Activated T-helper 2 cell treated with anti-CD3 and anti-CD28 coated beads, Interferon-gamma antibody, Interleukin-2, Interleukin-4, amounts not matched to agents 10 μg/mL and 5 μg/mL and 100 μg/mL, durations not matched to agents 14 hours and 24 hours and 36 hours (primary cell): ENCODE measurements at regions of chr5 and their contacts with region 1.

Region 1: DNA sequence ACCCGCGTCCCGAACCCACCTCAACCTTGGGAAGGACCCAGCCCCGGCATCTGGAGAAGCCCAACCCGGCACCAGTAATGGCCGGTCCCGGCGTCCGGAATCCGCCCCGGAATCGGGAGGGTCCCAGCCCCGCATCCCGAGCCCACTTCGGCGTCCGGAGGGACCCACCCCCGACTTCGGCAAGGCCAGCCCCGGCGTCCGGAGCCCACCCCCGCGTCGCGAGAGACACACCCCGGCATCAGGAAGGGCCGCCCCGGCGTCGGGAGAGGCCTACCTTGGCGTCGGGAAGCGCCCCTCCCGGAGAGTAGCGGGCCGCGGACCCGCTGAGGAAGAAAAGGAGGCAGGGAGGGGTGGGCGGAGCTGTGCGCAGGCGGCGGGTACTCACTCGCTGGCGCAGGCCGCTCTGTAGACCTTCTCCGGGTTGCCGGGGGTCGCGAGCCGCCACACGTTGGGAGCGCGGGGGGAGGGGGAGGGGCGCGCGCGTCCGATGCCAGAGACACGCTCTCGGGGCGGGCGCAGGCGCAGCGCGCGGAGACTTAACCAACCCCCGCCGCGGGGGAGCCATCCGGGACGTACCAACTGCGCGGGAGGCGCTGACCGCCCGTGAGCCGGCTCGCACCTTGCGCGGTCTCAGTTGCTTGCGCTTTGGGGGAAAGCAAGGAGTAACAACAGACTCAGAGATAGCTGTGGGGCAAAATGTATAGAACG is at the start of gene UIMC1:
- DNase-seq: peak; percentile 91
- H3K4me3 Mint-ChIP-seq: peak within 1 kb of the TSS; percentile 95
- H3K27ac Mint-ChIP-seq: peak within 1 kb of the TSS; percentile 93
- H3K4me1 Mint-ChIP-seq: peaks cover 17% of the 10 kb centered on the region
- H3K27me3 Mint-ChIP-seq: no peaks in the 10 kb centered on the region
- total RNA-seq, gene UIMC1: 62.6 and 63.3 TPM in 2 replicates

Region 2: DNA sequence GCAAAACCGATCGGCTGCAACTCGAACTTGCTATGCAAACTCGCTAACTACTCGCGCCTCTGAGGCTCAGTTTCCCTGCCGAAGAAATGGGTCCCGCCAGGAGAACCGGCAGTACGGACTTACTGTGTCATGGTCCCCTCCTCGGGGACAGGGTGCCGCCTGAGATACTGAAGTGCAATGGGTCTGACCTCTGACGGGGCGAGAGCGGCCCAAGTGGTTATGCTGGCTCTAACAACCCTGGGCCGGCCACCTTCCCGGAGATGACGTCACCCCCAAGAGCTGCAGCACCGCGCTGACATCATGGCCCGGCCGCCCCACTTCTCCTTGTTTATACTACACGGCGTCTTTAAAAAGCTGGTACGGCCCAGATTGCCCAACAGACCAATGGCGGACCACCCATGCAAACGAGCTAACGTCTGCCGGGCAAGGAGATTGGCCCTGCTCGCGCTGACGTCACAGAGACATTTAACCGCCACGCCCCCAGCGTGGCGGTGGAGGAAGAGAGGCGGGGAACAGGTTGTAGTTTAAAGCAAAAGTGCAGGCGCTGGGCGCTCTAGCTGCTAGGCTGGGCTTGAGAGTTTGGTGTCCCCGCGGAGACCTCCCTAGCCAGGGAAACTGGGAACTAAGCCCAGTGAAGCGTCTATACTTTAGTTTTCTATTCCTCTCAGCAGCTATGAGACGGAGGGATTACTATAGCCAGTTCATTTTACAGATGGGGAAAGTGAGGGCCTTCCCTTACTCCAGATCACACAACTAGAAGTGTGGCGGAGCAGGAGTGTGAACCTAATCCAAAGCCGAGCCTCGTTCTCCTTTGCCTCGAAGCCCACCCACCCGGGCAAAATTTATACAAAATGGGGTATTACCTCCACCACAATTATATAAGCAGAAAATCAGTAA is 468.6 kb before region 1 on chr5:
- intact Hi-C with region 1: loop called (anchors 5 kb)
- DNase-seq: peak; percentile 98
- H3K4me3 Mint-ChIP-seq: peak overlapping the region; percentile 98
- H3K27ac Mint-ChIP-seq: peak overlapping the region; percentile 96
- H3K4me1 Mint-ChIP-seq: peaks cover 58% of the 10 kb centered on the region
- H3K27me3 Mint-ChIP-seq: no peaks in the 10 kb centered on the region

Region 3: GRCh38 chr5:176647030-176647866 is 359.2 kb before region 1 on chr5 and contains the start of gene TSPAN17:
- intact Hi-C with region 1: loop called (anchors 5 kb)
- DNase-seq: peak; percentile 99
- H3K4me3 Mint-ChIP-seq: peak within 1 kb of the TSS; percentile 82
- H3K27ac Mint-ChIP-seq: peak within 1 kb of the TSS; percentile 86
- H3K4me1 Mint-ChIP-seq: peaks cover 35% of the 10 kb centered on the region
- H3K27me3 Mint-ChIP-seq: no peaks in the 10 kb centered on the region
- total RNA-seq, gene TSPAN17: 32.7 and 33.9 TPM in 2 replicates

Region 4: GRCh38 chr5:177022384-177023308 is 16.2 kb after region 1 on chr5 and contains the start of gene ZNF346:
- intact Hi-C with region 1: loop called (anchors 1 kb)
- DNase-seq: peak; percentile 88
- H3K4me3 Mint-ChIP-seq: peak within 1 kb of the TSS; percentile 98
- H3K27ac Mint-ChIP-seq: peak within 1 kb of the TSS; percentile 93
- H3K4me1 Mint-ChIP-seq: peaks cover 29% of the 10 kb centered on the region
- H3K27me3 Mint-ChIP-seq: no peaks in the 10 kb centered on the region
- total RNA-seq, gene ZNF346: 26.1 and 26.3 TPM in 2 replicates

Region 5: DNA sequence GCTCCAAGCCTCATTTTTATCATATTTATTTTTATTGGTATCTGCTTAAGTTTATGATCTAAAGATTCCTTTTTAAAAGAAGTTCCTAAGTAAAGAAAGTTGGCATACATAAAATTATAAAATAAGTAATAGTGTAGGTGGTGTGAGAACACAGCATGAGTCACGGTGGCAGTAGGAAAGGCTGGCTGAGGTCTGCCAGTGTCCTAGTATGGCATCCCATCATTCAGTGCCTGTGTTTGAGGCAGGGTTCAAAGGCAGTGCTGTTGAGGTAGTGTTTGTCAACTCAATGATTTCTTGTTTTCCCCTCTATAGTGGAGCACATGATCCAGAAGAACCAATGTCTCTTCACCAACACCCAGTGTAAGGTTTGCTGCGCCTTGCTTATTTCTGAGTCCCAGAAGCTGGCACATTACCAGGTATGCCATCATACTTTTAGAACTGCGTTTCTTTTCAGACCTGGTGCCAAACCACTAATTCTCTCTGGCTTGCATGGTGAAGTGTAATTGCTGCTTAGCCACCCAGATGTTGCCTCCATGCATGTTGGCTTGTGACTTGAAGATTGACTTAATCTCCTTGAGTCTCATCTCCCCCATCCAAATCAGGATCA is 34.5 kb after region 1 on chr5:
- intact Hi-C with region 1: no loop called
- DNase-seq: no peak
- H3K4me3 Mint-ChIP-seq: no peak overlapping the region
- H3K27ac Mint-ChIP-seq: no peak overlapping the region
- H3K4me1 Mint-ChIP-seq: peaks cover 5% of the 10 kb centered on the region
- H3K27me3 Mint-ChIP-seq: no peaks in the 10 kb centered on the region

Region 6: GRCh38 chr5:177133091-177133852 is 126.9 kb after region 1 on chr5 and contains the start of gene NSD1:
- intact Hi-C with region 1: loop called (anchors 5 kb)
- DNase-seq: peak; percentile 91
- H3K4me3 Mint-ChIP-seq: peak within 1 kb of the TSS; percentile 88
- H3K27ac Mint-ChIP-seq: peak within 1 kb of the TSS; percentile 83
- H3K4me1 Mint-ChIP-seq: peaks cover 36% of the 10 kb centered on the region
- H3K27me3 Mint-ChIP-seq: no peaks in the 10 kb centered on the region
- total RNA-seq, gene NSD1: 100.0 and 103 TPM in 2 replicates

Region 7: GRCh38 chr5:177303121-177303924 is 296.9 kb after region 1 on chr5 and contains the starts of genes PRELID1 and RAB24:
- intact Hi-C with region 1: loop called (anchors 5 kb)
- DNase-seq: peak; percentile 86
- H3K4me3 Mint-ChIP-seq: peak within 1 kb of the TSS; percentile 97
- H3K27ac Mint-ChIP-seq: peak within 1 kb of the TSS; percentile 87
- H3K4me1 Mint-ChIP-seq: peaks cover 56% of the 10 kb centered on the region
- H3K27me3 Mint-ChIP-seq: no peaks in the 10 kb centered on the region
- total RNA-seq, gene PRELID1: 223 and 229 TPM in 2 replicates
- total RNA-seq, gene RAB24: 17.7 and 19.0 TPM in 2 replicates

Region 8: GRCh38 chr5:178204182-178204894 is 1197.9 kb after region 1 on chr5 and contains the start of gene HNRNPAB:
- intact Hi-C with region 1: loop called (anchors 10 kb)
- DNase-seq: peak; percentile 94
- H3K4me3 Mint-ChIP-seq: peak within 1 kb of the TSS; percentile 95
- H3K27ac Mint-ChIP-seq: peak within 1 kb of the TSS; percentile 98
- H3K4me1 Mint-ChIP-seq: peaks cover 23% of the 10 kb centered on the region
- H3K27me3 Mint-ChIP-seq: peaks cover 2% of the 10 kb centered on the region
- total RNA-seq, gene HNRNPAB: 393 and 403 TPM in 2 replicates